ENCODE measurements at regions of chr5 and their contacts with region 1.

Region 1: DNA sequence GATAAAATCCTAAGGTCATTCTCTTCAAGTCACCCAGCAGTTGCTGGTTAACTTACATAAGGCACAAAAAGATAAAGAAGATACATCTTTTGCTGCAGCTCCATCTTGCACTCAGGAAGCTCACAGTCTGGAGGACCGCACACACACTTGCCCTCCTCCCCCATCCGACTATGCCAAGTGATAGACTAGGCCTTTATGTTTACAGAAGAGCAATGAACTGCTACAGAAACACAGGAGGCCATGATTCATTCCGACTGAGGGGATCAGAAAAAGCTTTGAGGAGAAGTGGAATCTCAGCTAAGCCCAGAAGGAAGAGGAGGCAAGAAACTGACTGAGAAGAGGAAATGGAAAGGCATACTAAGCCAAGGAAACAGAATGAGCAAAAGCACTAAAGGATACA is 17.4 kb downstream of the NRG2 start:
- DNase-seq: no peak
- CTCF ChIP-seq: no peak

Region 2: DNA sequence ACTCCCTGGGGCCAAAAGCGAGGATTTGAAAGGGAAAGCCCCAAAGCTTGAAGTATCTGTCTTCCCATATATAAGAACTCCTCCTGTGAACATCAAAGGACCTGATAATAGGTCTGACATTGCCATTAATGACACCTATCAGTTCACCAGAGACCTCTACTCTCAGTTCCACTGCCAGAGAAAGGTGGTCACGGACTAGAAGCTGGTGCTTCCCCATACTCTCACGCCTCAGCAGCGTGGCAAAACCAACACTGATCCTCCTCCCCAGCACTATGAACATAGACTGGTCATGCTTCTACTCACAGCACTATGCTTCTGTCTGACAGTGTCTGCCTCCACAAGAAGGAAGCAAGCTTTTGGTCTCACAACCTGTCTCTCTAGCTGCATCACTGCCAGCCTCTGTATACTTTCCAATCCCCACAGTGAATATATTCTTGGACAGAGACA is 20.6 kb before region 1 on chr5:
- CTCF ChIA-PET with region 1: interaction called, 12 read pairs
- POLR2A ChIA-PET with region 1: interaction called, 3 read pairs
- DNase-seq: peak; percentile 70
- CTCF ChIP-seq: no peak

Region 3: DNA sequence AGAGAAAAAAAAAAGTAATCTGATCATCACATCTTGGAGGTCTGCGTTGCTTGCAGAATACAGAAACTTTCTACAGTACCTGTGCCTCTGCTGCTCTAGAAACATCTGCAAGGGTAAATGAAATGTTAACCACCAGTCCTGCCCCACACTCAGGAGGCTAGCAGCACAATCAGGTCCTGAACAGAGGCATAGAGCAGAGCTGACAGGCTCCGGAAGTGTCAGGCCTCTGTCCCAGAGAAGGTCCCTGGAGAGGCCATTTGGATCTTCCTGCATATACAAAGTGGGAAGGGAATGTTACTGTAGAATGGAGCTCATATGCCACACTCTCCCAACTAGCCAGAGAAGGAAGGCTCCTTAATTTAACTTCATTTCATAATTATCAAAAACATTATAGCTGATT is 10.1 kb after region 1 on chr5:
- CTCF ChIA-PET with region 1: interaction called, 38 read pairs
- POLR2A ChIA-PET with region 1: no interaction called
- DNase-seq: no peak
- CTCF ChIP-seq: no peak

Region 4: DNA sequence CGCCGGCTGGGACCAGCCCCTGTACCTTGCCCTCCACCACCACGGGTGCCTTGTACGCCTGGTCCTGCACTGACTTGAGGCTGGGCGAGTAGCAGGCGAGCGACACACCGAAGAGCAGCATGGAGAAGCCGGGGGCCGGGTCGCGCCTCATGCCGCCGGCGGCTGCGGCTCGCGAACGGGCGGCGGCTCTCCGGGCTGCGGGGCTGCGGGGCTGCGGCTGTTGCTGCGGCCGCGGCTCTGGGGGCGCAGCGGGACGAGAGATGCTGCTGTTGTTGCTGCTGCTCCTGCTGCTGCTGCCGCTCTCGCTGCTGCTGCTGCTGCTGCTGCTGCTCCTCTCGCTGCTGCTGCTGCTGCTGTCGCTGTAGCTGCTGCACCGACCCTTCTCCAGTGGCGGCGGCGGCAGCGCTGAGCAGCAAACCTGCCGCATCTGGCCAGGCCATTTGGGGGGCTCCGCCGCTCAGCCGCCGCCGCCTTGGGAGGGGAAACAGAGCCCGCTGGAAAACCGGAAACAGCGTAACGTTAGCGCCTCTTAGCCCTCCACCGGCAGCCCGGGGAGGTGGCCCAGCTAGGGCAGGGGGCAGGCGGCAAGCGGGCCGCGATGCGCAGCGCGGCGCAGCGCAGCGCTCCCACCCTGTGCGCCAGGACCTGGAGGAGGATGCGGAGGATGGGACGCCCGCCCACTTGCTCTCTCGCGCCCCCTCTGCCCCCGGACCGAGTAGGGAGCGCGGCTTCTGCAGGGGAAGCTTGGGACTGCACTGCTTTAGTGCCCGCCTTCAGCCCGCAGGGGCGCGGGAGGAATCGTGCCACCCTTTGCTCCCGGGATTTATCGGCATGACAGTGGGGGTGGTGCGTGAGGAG is 17.1 kb after region 1 on chr5 and contains the start of gene NRG2:
- CTCF ChIA-PET with region 1: interaction called, 38 read pairs
- POLR2A ChIA-PET with region 1: no interaction called
- DNase-seq: peak; percentile 75
- CTCF ChIP-seq: peak; percentile 63

Region 5: GRCh38 chr5:140239939-140240700 is 214.4 kb after region 1 on chr5:
- CTCF ChIA-PET with region 1: no interaction called
- POLR2A ChIA-PET with region 1: no interaction called
- DNase-seq: peak; percentile 79
- CTCF ChIP-seq: peak; percentile 63

Region 6: DNA sequence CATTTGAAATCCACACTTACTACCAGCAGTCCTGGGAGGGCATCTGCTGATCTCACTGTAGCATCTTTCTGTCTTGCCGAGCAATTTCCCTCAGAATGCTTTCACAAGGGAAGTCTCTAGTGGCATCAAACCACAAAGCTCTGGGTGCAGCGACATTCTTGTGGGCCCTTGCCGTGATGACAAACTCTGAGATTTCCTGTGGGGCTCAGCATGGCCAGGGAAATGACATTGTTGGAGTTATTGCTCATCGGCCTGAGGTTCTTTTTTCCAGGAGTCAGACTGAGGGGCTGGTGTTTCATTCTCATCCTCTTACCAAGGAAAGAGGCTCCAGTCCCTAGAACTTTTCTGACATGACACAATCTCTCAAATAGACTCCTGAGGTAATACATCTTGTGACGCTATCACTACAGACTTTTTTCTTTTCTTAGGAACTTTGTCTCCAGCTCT is 225.8 kb after region 1 on chr5:
- CTCF ChIA-PET with region 1: no interaction called
- POLR2A ChIA-PET with region 1: no interaction called
- DNase-seq: no peak
- CTCF ChIP-seq: no peak

Region 7: GRCh38 chr5:140357726-140358093 is 332.0 kb after region 1 on chr5:
- CTCF ChIA-PET with region 1: no interaction called
- POLR2A ChIA-PET with region 1: no interaction called
- DNase-seq: peak; percentile 90
- CTCF ChIP-seq: peak; percentile 92

Measured in GM10248 (cell line).